OCI-LY7 (cell line): ENCODE measurements at regions of chr2 and their contacts with region 1.

Region 1: DNA sequence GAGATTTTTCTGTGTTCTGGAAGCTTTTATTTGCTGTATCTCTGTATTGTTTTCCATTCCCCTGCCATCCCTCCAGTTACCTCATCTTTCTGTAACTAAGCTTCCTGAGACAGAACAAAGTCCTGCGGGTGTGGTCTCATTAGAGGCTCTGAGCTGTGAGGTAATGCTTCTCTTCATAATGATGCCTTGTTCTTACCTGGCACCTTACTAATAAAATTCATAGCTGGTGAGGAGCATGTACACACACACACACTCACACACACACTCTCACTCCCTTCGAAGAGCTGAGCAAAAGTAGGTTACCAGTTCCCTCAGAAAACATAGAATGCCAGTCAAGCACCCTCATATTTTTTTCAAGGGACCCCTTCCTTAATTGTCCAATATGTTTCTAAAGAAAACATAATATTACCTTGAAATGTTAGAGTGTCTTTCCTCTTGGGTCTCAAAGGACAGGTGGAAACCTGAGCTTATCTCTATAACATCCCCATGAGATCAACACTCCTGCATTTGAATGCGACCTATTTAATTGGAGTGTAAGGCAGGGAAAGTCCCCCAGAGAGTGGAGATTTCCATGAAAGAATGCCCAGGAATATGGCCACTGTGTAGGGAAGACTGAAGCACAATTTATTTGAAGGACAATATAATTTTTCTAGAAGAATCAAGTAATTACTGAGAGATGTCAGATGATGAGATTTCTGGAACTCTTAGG is 161.6 kb upstream of the NCK2 start:
- DNase-seq: no peak
- H3K4me3 ChIP-seq: no peak overlapping the region
- H3K27ac ChIP-seq: no peak overlapping the region
- H3K4me1 ChIP-seq: no peaks in the 10 kb centered on the region
- CTCF ChIP-seq: no peak

Region 2: DNA sequence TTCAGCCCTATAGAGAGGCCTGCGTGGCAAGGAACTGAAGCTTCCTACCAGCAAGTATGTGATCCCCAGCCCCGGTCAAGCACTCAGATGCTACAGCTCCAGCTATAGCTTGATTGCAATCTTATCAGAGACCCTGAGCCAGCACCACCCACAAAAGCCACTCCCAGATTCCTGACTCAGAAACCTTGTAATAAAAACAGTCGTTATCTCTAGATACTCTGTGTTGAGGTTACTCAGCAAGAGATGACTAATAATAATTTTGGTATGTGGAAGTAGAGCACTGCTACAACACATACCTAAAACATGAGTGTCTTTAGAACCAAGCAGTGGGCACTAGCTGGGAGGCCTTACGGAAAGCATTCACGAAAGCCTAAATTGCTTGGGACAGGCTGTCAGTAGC is 394.1 kb after region 1 on chr2:
- CTCF ChIA-PET with region 1: no interaction called
- POLR2A ChIA-PET with region 1: no interaction called
- intact Hi-C with region 1: loop called (anchors 10 kb)
- DNase-seq: no peak
- H3K4me3 ChIP-seq: no peak overlapping the region
- H3K27ac ChIP-seq: no peak overlapping the region
- H3K4me1 ChIP-seq: peaks cover 2% of the 10 kb centered on the region
- CTCF ChIP-seq: no peak